Spleen (tissue), 13 donors: ENCODE measurements at regions of chr1 and their contacts with region 1.

Region 1: DNA sequence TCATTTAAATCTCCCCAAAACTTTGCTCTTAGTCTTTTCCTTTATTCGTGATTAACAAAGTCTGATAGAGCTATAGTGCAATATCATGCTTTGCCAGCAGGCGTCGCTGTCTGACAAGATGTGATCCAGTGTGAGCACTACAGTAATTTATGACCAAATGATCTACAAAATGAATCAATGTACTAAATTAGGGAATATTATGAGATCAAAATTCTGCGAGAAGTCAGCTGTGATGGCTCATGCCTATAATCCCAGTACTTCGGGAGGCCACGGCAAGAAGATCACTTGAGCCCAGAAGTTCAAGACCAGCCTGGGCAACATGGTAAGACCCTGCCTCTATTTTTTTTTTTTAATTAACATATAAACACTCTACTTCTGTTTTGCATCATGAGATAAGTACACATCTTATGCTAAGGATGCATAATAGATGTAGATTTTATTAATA is 3.6 kb upstream of the SPSB1 start:
- DNase-seq: peak; percentile 92
- H3K4me3 ChIP-seq: no peak overlapping the region
- H3K27ac ChIP-seq: no peak overlapping the region
- H3K4me1 ChIP-seq: peaks cover 3 to 40% (median 24%) of the 10 kb centered on the region in 6 donors
- H3K27me3 ChIP-seq: peaks cover 0 to 15% (median 3%) of the 10 kb centered on the region in 7 donors
- CTCF ChIP-seq: peak; percentile 77 to 98 (median 94)
- POLR2A ChIP-seq: no peak

Region 2: GRCh38 chr1:9455487-9456234 is 166.5 kb after region 1 on chr1:
- intact Hi-C with region 1: loop called (anchors 2 kb)
- DNase-seq: peak; percentile 87
- H3K4me3 ChIP-seq: no peak overlapping the region
- H3K27ac ChIP-seq: no peak overlapping the region
- H3K4me1 ChIP-seq: peaks cover 0 to 5% (median 2%) of the 10 kb centered on the region in 6 donors
- H3K27me3 ChIP-seq: peaks cover 0 to 11% (median 0%) of the 10 kb centered on the region in 7 donors
- CTCF ChIP-seq: peak; percentile 54 to 87 (median 82)
- POLR2A ChIP-seq: no peak

Region 3: DNA sequence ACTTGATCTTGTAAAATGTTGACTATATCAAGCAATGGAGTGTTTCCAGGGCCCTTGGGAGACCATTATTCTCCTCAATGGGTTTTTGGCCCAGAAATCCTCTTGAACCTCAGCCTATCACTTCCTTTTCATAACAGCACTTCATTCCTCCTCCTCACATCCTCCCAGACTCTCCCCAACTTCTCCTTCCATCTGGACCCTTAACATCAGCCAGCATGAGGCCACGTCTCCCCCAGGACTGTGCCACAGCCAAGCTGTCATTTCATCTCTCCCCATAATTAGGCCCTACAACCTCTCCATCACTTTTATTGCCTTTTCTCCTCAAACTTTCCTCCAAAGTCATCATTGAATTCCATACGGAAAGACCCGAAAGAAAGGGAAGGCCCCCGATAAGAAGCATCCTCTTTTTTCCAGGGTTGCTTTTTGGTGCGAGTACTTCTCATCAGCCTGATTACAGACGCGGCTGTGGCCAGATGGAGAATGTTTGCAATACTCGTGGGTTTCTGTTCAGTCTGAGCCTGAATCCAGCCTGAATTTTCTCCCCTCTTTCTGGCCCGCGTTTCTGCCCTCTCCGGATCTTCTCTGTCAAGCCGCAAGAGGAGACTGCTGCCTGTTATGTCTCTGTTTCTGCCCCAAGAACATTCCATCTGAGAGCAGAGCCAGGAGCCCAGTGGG is 197.5 kb after region 1 on chr1:
- intact Hi-C with region 1: loop called (anchors 2 kb)
- DNase-seq: no peak
- H3K4me3 ChIP-seq: no peak overlapping the region
- H3K27ac ChIP-seq: no peak overlapping the region
- H3K4me1 ChIP-seq: peaks cover 0 to 5% (median 0%) of the 10 kb centered on the region in 6 donors
- H3K27me3 ChIP-seq: peaks cover 0 to 19% (median 0%) of the 10 kb centered on the region in 7 donors
- CTCF ChIP-seq: no peak
- POLR2A ChIP-seq: no peak